OCI-LY7 (cell line): ENCODE measurements at regions of chr21 and their contacts with region 1.

Region 1: DNA sequence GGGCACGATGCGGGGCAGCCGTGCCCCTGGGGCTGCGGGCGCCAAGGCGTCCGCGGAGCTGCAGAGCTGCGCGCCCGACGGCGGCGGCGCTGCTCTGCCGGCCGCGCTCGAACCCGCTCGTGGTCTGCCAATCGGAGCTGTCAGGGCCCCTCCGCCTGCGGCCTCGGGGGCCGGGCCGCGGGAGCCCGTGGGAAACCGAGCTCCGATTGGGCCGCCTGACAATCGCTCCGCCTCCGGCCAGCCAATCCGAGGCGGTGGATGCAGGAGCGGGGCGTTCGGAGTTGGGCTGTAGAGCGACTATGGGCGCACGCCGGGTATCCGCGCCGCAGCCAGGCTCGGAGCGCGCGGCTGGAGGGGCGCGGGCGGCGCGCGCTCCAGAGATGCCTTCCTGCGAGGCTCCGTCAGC is 100.5 kb upstream of the SOD1 start:
- DNase-seq: peak; percentile 97
- H3K4me3 ChIP-seq: peak overlapping the region; percentile 83
- H3K27ac ChIP-seq: peak overlapping the region; percentile 71
- H3K4me1 ChIP-seq: peaks cover 20% of the 10 kb centered on the region
- CTCF ChIP-seq: peak; percentile 50

Region 2: GRCh38 chr21:31343680-31344480 is 215.1 kb before region 1 on chr21 and contains the start of gene TIAM1:
- CTCF ChIA-PET with region 1: no interaction called
- POLR2A ChIA-PET with region 1: interaction called, 4 read pairs
- intact Hi-C with region 1: loop called (anchors 10 kb)
- DNase-seq: no peak
- H3K4me3 ChIP-seq: no peak within 1 kb of the TSS
- H3K27ac ChIP-seq: no peak within 1 kb of the TSS
- H3K4me1 ChIP-seq: no peaks in the 10 kb centered on the region
- CTCF ChIP-seq: no peak
- total RNA-seq, gene TIAM1: 12.4 and 15.0 TPM in 2 replicates

Region 3: DNA sequence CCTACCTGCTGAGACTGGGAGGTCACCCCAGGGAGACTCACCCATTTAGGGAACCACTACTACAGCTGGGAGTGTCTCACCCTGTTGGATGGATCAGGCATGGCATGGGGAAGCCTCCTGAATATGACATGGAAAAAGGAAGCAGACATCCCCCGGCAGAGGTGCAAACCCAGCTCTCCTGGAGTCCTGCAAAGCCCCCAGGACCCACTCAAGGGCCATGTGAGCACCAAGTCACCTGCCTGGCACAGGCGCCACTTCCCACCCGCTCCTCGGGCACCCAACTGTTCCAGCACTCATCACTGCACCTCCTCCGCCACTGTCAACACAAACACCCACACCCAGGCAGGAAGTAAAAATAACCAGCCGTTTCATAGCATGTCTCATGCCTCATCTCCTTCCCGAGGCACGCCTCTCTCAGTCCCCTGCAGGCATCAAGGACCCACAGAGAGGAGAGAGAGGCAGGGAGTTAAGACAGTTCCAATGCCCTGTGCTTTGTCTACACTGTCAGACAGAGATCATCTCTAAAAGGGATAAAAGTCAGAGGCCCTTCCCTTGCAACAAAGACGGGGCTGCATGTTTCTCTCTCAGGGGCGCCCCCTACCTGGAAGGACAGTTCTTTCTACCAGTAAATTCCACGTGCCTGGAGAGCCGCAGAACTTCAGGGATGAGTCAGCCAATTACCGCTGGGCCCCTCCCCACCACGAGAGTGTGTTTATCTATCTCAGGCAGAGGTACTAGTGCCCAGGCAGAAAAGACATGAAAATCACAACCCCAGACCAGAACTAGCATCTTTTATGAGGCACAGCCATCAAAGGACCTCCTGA is 49.6 kb before region 1 on chr21:
- CTCF ChIA-PET with region 1: no interaction called
- POLR2A ChIA-PET with region 1: interaction called, 10 read pairs
- intact Hi-C with region 1: loop called (anchors 2 kb)
- DNase-seq: peak; percentile 64
- H3K4me3 ChIP-seq: no peak overlapping the region
- H3K27ac ChIP-seq: peak overlapping the region; percentile 5
- H3K4me1 ChIP-seq: peaks cover 50% of the 10 kb centered on the region
- CTCF ChIP-seq: peak; percentile 86

Region 4: DNA sequence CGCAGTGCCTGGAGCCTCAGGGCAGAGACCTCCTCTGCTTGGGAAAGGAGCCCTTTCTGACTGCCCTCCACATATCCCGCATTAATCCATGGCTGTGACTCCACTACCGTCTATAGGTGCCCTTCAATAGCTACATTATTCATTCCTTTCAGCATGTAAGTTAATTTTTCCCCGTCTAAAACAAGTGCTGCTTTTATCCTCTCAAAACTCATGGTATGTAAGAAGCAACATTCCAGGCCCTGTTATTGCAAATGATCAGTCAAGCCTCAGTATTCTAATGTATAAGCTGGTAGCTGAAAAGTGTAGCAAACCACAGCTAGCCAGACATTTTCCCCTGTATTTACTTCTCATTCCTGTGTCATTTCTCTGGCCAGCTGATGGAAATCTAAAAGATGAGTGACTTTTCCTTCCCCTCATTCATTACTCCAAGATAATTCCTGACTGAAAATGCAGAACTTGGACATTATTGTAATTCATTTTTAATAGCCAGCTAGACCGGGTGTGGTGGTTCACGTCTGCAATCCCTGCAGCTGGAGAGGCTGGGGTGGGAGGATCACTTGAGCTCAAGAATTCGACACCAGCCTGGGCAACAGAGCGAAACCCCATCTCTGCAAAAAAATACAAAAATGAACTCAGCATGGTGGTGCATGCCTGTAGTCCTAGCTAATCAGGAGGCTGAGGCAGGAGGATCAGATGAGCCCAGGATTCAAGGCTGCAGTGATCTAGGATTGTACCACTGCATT is 12.0 kb after region 1 on chr21:
- CTCF ChIA-PET with region 1: interaction called, 4 read pairs
- POLR2A ChIA-PET with region 1: interaction called, 14 read pairs
- intact Hi-C with region 1: no loop called
- DNase-seq: no peak
- H3K4me3 ChIP-seq: no peak overlapping the region
- H3K27ac ChIP-seq: no peak overlapping the region
- H3K4me1 ChIP-seq: no peaks in the 10 kb centered on the region
- CTCF ChIP-seq: no peak

Region 5: DNA sequence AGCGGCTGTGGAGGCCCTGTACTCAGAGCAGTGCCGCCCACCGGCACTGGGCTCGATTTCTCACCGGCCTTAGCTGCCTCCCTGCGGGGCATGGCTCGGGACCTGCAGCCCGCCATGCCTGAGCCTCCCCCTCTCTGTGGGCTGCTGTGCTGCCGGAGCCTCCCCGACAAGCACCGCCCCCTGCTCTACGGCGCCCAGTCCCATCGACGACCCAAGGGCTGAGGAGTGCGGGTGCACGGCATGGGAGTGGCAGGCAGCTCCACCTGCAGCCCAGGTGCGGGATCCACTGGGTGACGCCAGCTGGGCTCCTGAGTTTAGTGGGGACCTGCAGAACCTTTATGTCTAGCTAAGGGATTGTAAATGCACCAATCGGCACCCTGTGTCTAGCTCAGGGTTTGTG is 95.4 kb after region 1 on chr21:
- CTCF ChIA-PET with region 1: no interaction called
- POLR2A ChIA-PET with region 1: no interaction called
- intact Hi-C with region 1: no loop called
- DNase-seq: no peak
- H3K4me3 ChIP-seq: no peak overlapping the region
- H3K27ac ChIP-seq: no peak overlapping the region
- H3K4me1 ChIP-seq: peaks cover 6% of the 10 kb centered on the region
- CTCF ChIP-seq: no peak

Region 6: GRCh38 chr21:31731802-31732596 is 173.0 kb after region 1 on chr21 and contains the start of gene SCAF4:
- CTCF ChIA-PET with region 1: no interaction called
- POLR2A ChIA-PET with region 1: interaction called, 3 read pairs
- intact Hi-C with region 1: loop called (anchors 10 kb)
- DNase-seq: peak; percentile 91
- H3K4me3 ChIP-seq: peak within 1 kb of the TSS; percentile 85
- H3K27ac ChIP-seq: peak within 1 kb of the TSS; percentile 90
- H3K4me1 ChIP-seq: peaks cover 55% of the 10 kb centered on the region
- CTCF ChIP-seq: no peak
- total RNA-seq, gene SCAF4: 22.5 and 25.9 TPM in 2 replicates